OCI-LY7 (cell line): ENCODE measurements at regions of chr14 and their contacts with region 1.

Region 1: GRCh38 chr14:94689218-94689984 is 77.2 kb downstream of the SERPINA3 start:
- DNase-seq: peak; percentile 33
- H3K4me3 ChIP-seq: no peak overlapping the region
- H3K27ac ChIP-seq: no peak overlapping the region
- H3K4me1 ChIP-seq: no peaks in the 10 kb centered on the region
- CTCF ChIP-seq: peak; percentile 88

Region 2: DNA sequence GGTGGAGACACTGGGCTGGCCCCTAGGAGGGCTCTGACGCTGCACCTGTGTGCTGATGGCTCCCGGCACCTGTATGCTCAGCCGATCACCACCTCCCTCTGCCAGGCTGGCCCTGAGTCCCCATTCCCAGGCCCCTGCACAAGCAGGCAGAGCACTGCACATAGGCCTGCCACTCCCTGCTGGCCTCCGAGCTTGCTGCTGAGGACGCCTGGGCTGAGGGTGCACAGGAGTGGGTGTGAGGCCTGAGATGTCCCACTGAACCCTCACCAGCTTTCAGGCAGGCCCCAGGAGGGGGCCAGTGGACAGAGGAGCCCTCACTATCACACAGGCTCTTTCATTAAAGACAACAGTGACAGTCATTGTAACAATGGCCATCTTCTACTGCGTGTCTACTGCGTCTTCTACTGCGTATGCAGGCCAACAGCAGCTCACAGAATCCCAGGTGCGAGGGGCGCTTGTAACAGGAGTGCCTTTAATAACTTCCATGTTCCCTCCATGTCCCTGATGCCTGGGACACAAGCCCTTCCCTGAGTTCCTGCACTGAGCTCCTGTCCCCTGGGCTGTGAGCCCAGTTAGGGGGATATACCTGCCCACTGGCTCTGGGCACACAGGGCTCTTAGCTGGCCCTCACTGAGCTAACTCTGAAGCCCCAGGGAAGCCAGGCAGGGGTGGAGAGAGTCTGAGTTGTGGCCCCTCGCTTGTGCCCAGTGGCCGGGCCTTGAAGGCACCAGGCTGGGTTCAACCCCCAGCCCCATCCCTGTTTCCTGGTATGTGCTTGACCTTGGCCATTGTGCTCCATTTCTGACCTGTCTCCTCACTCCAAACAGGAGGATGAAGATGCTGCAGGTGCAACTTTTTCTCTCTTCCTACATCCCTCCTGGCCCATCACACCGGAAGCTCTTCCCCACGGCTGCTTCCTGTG is 972.4 kb before region 1 on chr14:
- CTCF ChIA-PET with region 1: no interaction called
- POLR2A ChIA-PET with region 1: no interaction called
- intact Hi-C with region 1: no loop called
- DNase-seq: no peak
- H3K4me3 ChIP-seq: no peak overlapping the region
- H3K27ac ChIP-seq: no peak overlapping the region
- H3K4me1 ChIP-seq: no peaks in the 10 kb centered on the region
- CTCF ChIP-seq: no peak

Region 3: DNA sequence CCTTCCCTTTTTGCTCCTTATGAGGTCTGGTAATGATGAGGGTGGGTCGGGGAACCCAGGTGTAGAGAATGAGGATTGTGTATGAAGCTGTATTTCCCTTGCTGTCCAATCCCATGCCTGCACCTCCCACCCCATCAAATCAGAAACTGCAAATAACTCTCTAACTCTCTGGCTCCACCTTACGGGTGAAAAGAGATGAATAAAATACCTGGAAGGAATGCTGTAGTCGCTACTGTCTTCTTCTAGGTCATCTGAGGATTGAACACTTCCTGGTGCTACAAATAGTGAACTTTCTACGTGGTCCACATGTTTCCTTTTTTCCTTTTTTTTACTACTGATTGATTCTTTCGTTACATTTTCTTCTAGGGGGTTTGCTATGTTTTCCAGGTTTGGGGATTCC is 506.9 kb after region 1 on chr14:
- CTCF ChIA-PET with region 1: no interaction called
- POLR2A ChIA-PET with region 1: no interaction called
- intact Hi-C with region 1: loop called (anchors 2 kb)
- DNase-seq: peak; percentile 51
- H3K4me3 ChIP-seq: no peak overlapping the region
- H3K27ac ChIP-seq: no peak overlapping the region
- H3K4me1 ChIP-seq: no peaks in the 10 kb centered on the region
- CTCF ChIP-seq: peak; percentile 82

Region 4: GRCh38 chr14:95361373-95362137 is 672.2 kb after region 1 on chr14:
- CTCF ChIA-PET with region 1: no interaction called
- POLR2A ChIA-PET with region 1: no interaction called
- intact Hi-C with region 1: loop called (anchors 5 kb)
- DNase-seq: peak; percentile 55
- H3K4me3 ChIP-seq: no peak overlapping the region
- H3K27ac ChIP-seq: no peak overlapping the region
- H3K4me1 ChIP-seq: no peaks in the 10 kb centered on the region
- CTCF ChIP-seq: peak; percentile 92

Region 5: DNA sequence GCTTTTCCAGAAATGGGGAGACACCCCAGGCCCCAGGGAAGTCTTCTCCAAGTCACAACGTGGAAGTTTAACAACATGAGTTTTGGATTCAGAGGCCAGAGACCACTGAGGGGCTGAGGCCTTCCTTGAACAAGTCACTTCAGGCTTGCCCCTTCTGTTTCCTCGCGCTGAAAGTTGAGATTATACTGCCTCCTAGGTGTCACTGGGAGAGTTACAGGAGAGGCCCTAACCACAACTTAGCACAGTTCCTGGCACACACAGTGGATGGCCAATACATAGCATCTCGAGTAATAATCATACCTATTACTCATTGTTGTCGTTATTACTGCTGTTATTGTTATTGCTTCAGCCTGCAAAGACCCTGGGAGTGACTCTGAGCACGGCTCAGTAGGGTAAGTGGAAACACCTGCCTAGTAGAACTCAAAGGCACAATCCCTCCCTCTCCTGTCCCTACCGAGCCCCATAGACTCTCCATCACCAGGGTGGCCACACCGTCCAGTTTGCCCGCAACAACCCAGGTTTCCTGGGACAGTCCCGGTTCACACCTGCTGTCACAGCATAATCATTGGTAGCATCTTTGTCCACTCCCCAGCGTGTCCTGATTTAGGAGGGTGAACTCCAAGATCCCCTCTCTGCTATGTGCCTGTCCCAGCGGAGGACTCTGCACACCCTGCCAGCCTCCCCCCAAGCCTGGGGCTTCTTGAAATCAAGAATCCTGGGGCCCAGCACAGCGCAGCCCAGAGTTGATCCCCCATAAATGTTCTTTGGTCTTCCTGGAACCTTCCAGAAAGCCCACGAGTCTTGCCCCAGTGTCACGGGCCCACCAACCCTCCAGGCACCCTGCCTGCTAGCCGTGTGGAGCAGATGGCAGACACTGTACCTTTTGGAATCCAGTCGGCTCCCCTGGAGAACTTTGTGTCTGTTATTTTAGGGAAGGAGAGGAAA is 742.1 kb after region 1 on chr14:
- CTCF ChIA-PET with region 1: no interaction called
- POLR2A ChIA-PET with region 1: no interaction called
- intact Hi-C with region 1: loop called (anchors 10 kb)
- DNase-seq: peak; percentile 65
- H3K4me3 ChIP-seq: no peak overlapping the region
- H3K27ac ChIP-seq: no peak overlapping the region
- H3K4me1 ChIP-seq: peaks cover 3% of the 10 kb centered on the region
- CTCF ChIP-seq: peak; percentile 82